ENCODE measurements at regions of chr1 and their contacts with region 1.

Region 1: GRCh38 chr1:151070474-151071276 is at the start of gene GABPB2:
- DNase-seq: peak; percentile 88
- ATAC-seq: peak; percentile 96
- H3K4me3 ChIP-seq: peak within 1 kb of the TSS; percentile 88 to 94
- H3K27ac ChIP-seq: peak within 1 kb of the TSS; percentile 99
- H3K4me1 ChIP-seq: peaks cover 13% of the 10 kb centered on the region
- H3K27me3 ChIP-seq: no peaks in the 10 kb centered on the region
- CTCF ChIP-seq: peak; percentile 99
- total RNA-seq, gene GABPB2: 8.1 TPM

Region 2: GRCh38 chr1:150696590-150697524 is 373.8 kb before region 1 on chr1 and contains the start of gene GOLPH3L:
- CTCF ChIA-PET with region 1: no interaction called
- POLR2A ChIA-PET with region 1: interaction called, 12 read pairs
- in situ Hi-C with region 1: no loop called
- intact Hi-C with region 1: no loop called
- DNase-seq: peak; percentile 98
- ATAC-seq: peak; percentile 100
- H3K4me3 ChIP-seq: peak within 1 kb of the TSS; percentile 81 to 83
- H3K27ac ChIP-seq: peak within 1 kb of the TSS; percentile 90
- H3K4me1 ChIP-seq: peaks cover 8% of the 10 kb centered on the region; the same call in 1 of the 2 replicates
- H3K27me3 ChIP-seq: peaks cover 3% of the 10 kb centered on the region; the same call in 1 of the 2 replicates
- CTCF ChIP-seq: no peak
- total RNA-seq, gene GOLPH3L: 19.6 TPM

Region 3: GRCh38 chr1:151085953-151086559 is 15.4 kb after region 1 on chr1:
- CTCF ChIA-PET with region 1: interaction called, 5 read pairs
- POLR2A ChIA-PET with region 1: interaction called, 15 read pairs
- in situ Hi-C with region 1: no loop called
- intact Hi-C with region 1: no loop called
- DNase-seq: no peak
- ATAC-seq: no peak
- H3K4me3 ChIP-seq: no peak overlapping the region
- H3K27ac ChIP-seq: no peak overlapping the region
- H3K4me1 ChIP-seq: no peaks in the 10 kb centered on the region
- H3K27me3 ChIP-seq: no peaks in the 10 kb centered on the region
- CTCF ChIP-seq: no peak

Measured in Panc1 (cell line).